Right ventricle myocardium inferior (tissue), 1 donor: ENCODE measurements at regions of chr9 and their contacts with region 1.

Region 1: DNA sequence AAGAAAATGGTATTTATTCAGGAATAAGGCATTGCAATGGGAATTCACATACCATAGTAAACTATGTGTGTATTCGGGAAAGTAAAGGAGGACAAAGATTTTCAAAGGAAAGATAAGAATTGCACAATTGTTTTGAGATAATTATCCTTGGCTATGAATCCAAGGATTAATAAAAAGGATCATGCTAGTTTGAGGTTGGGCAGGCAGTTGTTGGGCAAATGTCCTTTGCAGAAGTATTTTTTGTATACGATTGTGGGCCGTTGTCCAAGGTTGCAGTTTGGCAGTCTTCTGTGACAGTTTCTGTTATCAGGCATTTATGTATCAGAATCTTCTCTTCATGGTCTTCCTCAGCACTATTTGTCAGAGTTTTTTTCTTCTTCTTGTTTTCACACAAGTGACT is 10.6 kb upstream of the UBAP2 start:
- DNase-seq: no peak
- ATAC-seq: no peak

Region 2: DNA sequence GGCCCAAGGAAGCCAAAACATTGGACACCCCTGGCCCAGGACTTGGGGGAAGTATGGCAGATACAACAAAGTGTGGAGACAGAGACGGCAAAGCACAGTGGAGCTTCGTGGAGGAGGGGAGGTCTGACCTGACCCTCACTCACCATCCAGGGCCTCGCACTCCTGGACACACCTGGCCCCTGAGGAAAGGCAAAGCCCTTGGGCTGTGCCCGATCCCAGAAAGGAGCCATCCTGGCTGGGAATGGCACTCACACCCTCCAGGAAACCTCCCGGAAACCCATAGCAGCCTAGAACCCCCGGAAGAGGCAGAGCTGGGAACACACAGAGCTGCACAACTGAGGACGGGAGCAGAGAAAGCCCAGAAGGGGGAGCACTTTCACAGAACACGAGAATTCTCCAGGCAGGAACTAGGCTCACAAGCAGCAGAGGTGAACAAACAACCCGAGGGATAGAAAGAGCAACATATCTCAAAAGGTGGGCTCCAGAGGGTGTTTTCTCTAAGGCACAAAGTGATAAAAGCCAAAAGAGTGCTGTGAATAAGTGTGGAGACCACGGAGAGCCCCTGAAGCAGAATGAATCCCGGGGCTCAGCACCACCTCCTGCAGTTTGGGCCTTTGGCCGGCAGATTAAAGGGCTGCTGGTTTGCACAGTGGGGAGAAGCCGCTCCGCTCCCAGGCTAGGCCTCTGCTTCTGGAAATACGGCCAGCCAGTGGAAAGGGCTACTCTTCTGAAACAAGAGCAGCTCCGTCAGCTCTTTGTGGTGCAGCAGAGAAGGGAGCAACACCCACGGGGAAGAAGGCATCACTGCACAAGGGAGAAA is 134.1 kb before region 1 on chr9:
- intact Hi-C with region 1: loop called (anchors 5 kb)
- DNase-seq: no peak
- ATAC-seq: peak; percentile 61

Region 3: DNA sequence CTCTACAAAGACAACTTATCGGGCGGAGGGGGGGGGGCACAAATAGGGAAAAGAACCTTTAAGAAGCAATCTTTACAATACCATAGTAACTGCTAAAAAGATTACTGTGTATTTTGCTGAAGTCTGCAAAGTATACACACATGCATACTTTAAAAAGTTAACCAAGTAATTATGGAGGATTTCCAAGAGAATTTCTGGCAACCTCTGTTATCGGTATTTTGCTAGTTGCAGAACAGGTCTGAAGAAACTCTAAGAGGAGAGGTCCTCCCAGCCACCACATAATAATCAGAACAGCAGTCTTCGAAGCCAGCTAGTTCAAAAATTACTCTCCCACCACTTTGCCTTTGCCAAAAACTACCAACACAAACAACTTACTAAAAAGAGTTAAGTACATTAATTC is 66.6 kb before region 1 on chr9:
- intact Hi-C with region 1: no loop called
- DNase-seq: no peak
- ATAC-seq: no peak